Activated CD8-positive, alpha-beta T cell treated with anti-CD3 and anti-CD28 coated beads, Interleukin-2, amount 10 ng/mL, durations not matched to agents 7 days and 5 days (primary cell): ENCODE measurements at regions of chr20 and their contacts with region 1.

Region 1: GRCh38 chr20:50115591-50116372 is 2.8 kb upstream of the UBE2V1 start:
- DNase-seq: peak; percentile 93
- ATAC-seq: peak; percentile 75
- H3K4me3 Mint-ChIP-seq: peak overlapping the region; percentile 77
- H3K27ac Mint-ChIP-seq: peak overlapping the region; percentile 89
- H3K4me1 Mint-ChIP-seq: peaks cover 53% of the 10 kb centered on the region
- H3K27me3 Mint-ChIP-seq: no peaks in the 10 kb centered on the region

Region 2: GRCh38 chr20:50085452-50086365 is 30.1 kb before region 1 on chr20:
- CTCF ChIA-PET with region 1: interaction called, 72 read pairs
- POLR2A ChIA-PET with region 1: no interaction called
- DNase-seq: peak; percentile 54
- ATAC-seq: peak; percentile 83
- H3K4me3 Mint-ChIP-seq: peak overlapping the region; percentile 64
- H3K27ac Mint-ChIP-seq: peak overlapping the region; percentile 80
- H3K4me1 Mint-ChIP-seq: peaks cover 22% of the 10 kb centered on the region
- H3K27me3 Mint-ChIP-seq: no peaks in the 10 kb centered on the region

Region 3: DNA sequence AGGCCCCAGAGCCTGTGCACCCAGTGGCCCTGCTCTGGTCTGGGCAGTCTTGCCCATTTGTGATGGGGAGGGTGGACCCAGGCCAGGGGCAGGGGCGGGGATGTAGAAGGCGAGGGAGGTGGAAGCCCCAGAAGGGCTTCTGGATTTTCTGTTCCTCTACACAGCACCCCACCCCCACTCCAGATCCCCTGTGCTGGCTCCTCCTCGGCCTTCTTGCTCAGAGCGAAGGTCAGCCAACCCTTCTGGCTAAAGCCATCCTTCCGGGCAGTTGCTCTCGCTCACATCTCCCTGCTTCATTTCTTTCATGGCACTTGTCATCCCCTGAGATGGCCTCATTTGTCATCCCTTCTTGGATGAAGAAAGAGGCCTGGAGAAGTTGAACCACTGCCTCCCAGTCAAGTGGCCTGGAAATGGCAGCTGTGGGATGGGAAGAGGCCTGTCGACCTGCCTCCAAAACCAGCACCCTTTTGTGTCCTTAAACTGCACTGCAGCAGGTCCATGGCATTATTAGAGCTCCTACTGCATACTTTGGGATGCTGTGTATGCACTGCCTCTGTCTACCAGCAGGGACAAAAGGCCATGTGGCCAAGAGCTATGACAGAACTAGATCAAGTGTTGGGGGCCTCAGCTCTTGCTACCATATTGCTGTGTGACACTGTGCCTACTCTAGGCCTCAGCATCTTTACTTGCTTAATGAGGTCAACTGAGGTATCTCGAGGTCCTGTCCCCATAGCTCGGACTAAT is 17.9 kb after region 1 on chr20:
- CTCF ChIA-PET with region 1: interaction called, 11 read pairs
- POLR2A ChIA-PET with region 1: no interaction called
- DNase-seq: no peak
- ATAC-seq: no peak
- H3K4me3 Mint-ChIP-seq: no peak overlapping the region
- H3K27ac Mint-ChIP-seq: no peak overlapping the region
- H3K4me1 Mint-ChIP-seq: no peaks in the 10 kb centered on the region
- H3K27me3 Mint-ChIP-seq: no peaks in the 10 kb centered on the region

Region 4: GRCh38 chr20:50153485-50154377 is 37.9 kb after region 1 on chr20 and contains the start of gene PEDS1:
- CTCF ChIA-PET with region 1: interaction called, 56 read pairs
- POLR2A ChIA-PET with region 1: interaction called, 22 read pairs
- DNase-seq: peak; percentile 87
- ATAC-seq: peak; percentile 99
- H3K4me3 Mint-ChIP-seq: peak within 1 kb of the TSS; percentile 78
- H3K27ac Mint-ChIP-seq: peak within 1 kb of the TSS; percentile 84
- H3K4me1 Mint-ChIP-seq: peaks cover 43% of the 10 kb centered on the region
- H3K27me3 Mint-ChIP-seq: no peaks in the 10 kb centered on the region
- total RNA-seq, gene PEDS1: 28.7 to 30.2 TPM

Region 5: GRCh38 chr20:50179507-50180016 is 63.8 kb after region 1 on chr20:
- CTCF ChIA-PET with region 1: interaction called, 37 read pairs
- POLR2A ChIA-PET with region 1: no interaction called
- DNase-seq: no peak
- ATAC-seq: no peak
- H3K4me3 Mint-ChIP-seq: no peak overlapping the region
- H3K27ac Mint-ChIP-seq: no peak overlapping the region
- H3K4me1 Mint-ChIP-seq: no peaks in the 10 kb centered on the region
- H3K27me3 Mint-ChIP-seq: peaks cover 15% of the 10 kb centered on the region